Dendritic cell treated with granulocyte-macrophage colony-stimulating factor and Interleukin-4, amounts not matched to agents 40 ng/mL and 50 ng/mL, for 4 days (primary cell): ENCODE measurements at regions of chr2 and their contacts with region 1.

Region 1: DNA sequence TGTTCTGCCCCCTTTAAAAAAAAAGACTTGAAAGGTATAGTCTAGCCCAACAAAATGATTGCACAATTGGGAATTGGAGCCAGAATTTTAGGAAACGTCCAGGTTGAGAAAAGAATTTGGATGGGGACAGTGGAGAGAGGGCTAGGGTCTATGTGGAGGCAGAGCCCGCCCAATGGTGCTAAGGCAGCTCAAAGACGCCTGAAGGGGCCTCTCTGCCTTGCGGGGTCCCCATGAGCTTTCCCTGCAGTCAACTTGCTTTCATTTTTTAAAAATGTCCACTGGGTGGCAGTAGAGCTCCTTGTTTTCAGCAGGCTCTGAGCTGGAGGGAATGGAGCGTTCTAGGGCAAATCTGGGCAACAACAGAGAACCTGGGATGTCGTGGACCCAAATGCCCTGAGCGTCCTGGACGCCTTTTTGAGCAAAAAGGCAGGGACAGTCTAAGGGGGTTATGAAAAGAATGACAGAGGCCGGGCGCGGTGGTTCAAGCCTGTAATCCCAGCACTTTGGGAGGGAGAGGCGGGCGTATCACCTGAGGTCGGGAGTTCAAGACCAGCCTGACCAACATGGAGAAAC is 40.2 kb upstream of the ITM2C start:
- H3K4me3 Mint-ChIP-seq: peak overlapping the region; percentile 55
- H3K27ac Mint-ChIP-seq: no peak overlapping the region
- H3K4me1 Mint-ChIP-seq: peaks cover 7% of the 10 kb centered on the region
- H3K27me3 Mint-ChIP-seq: peaks cover 44% of the 10 kb centered on the region

Region 2: GRCh38 chr2:230847883-230848388 is 23.4 kb after region 1 on chr2:
- intact Hi-C with region 1: loop called (anchors 1 kb)
- H3K4me3 Mint-ChIP-seq: no peak overlapping the region
- H3K27ac Mint-ChIP-seq: no peak overlapping the region
- H3K4me1 Mint-ChIP-seq: peaks cover 7% of the 10 kb centered on the region
- H3K27me3 Mint-ChIP-seq: peaks cover 39% of the 10 kb centered on the region

Region 3: GRCh38 chr2:230956827-230957755 is 132.6 kb after region 1 on chr2:
- intact Hi-C with region 1: no loop called
- H3K4me3 Mint-ChIP-seq: peak overlapping the region; percentile 70
- H3K27ac Mint-ChIP-seq: peak overlapping the region; percentile 75
- H3K4me1 Mint-ChIP-seq: peaks cover 43% of the 10 kb centered on the region
- H3K27me3 Mint-ChIP-seq: peaks cover 43% of the 10 kb centered on the region

Region 4: DNA sequence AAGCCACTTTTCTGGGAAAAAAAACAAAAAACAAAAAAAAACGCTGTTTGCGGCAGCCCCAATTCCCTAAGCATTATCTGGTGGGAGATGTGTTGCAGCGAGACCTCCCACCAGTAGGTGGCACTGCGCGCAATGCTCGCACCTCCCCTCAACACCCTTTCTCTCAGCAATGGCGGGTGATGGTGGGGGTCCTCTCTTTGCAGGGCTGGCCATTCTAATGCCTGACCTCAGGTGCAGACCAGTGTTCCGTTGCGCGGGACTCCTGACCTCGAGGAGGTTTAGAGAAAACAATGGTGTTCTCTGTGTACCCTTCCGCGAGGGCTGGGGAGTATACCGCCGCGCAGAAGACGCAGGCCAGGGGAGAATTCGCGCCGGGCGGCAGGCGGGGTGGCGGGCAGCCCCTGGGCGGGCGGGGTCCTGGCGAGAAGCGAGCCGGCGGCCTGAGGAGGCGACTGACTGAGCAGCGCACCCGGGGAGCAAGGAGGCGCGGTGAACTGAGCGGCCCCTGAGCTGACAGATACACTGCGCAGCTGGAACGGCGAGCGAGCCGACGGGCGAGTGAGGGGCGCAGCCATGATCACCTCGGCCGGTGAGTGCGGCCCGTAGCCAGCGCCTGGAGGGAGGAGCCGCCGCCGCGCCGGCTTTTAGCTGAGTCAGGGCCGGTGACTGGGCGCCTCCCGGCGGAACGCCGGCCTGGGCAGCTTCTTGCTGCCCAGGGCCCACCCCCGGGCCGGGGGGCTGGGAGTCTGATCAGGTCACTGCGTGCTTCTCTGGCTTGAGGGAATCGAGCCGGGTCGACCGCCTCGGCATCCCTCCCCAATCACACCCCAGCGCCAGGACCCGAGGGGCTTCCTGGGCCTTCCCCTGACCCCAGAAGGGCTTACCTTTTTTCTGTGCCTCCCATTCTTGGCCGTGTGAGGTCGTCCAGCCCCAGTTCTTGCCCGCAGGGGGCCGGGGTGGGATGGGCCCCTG is 232.2 kb after region 1 on chr2 and contains the start of gene PSMD1:
- intact Hi-C with region 1: loop called (anchors 5 kb)
- H3K4me3 Mint-ChIP-seq: peak within 1 kb of the TSS; percentile 94
- H3K27ac Mint-ChIP-seq: peak within 1 kb of the TSS; percentile 97
- H3K4me1 Mint-ChIP-seq: peaks cover 45% of the 10 kb centered on the region
- H3K27me3 Mint-ChIP-seq: peaks cover 24% of the 10 kb centered on the region